Breast epithelium (tissue), 4 donors: ENCODE measurements at regions of chr15 and their contacts with region 1.

Region 1: DNA sequence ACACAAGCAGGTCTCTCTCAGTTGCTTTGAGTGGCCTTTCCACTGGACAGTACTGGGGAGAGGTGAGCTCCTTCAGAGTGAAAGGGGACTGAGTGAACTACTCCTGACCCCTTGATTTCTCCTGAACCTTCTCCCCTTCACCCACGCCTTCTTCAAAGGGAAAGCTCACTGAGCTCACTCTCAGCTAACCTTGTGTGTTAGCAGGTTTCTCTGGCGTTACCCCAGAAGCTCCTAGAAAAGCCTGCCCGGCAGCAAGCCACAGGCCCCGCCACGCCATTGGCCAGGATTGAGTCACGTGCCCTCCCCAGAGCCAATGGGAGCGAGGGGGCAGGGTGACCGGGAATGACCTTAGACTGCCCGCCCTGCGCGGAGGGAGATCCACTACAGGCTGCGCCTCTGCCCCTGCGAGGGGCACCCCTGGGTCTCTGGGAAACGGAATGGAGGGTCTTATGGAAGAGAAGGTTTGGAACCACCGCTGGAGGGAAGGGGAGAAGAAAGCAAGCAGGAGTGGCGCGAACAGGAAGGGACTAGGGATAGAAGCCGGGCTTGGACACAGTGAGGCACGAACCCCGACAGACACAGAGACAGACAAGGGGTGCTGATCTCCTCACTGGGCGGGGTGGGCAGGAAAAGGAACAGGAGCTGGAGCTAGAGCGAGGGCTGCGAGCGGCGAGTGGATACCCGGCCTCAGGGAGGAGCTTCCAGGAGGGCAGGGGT is 17.4 kb upstream of the CLK3 start:
- DNase-seq: peak; percentile 93 to 96
- H3K4me3 ChIP-seq: peak overlapping the region; percentile 53 to 63 (median 61)
- H3K27ac ChIP-seq: peak overlapping the region; percentile 67 to 87
- H3K4me1 ChIP-seq: no peaks in the 10 kb centered on the region
- H3K27me3 ChIP-seq: no peaks in the 10 kb centered on the region
- CTCF ChIP-seq: no peak
- POLR2A ChIP-seq: peak; percentile 48

Region 2: GRCh38 chr15:74615508-74616365 is 17.5 kb after region 1 on chr15 and contains the start of gene CLK3:
- intact Hi-C with region 1: no loop called
- DNase-seq: peak; percentile 93 to 95
- H3K4me3 ChIP-seq: peak within 1 kb of the TSS; percentile 90 to 99 (median 98)
- H3K27ac ChIP-seq: peak within 1 kb of the TSS; percentile 99
- H3K4me1 ChIP-seq: peaks cover 0 to 29% of the 10 kb centered on the region in 2 donors
- H3K27me3 ChIP-seq: no peaks in the 10 kb centered on the region
- CTCF ChIP-seq: no peak
- POLR2A ChIP-seq: peak; percentile 65
- total RNA-seq, gene CLK3: 99.2 to 110 (median 101) TPM

Region 3: DNA sequence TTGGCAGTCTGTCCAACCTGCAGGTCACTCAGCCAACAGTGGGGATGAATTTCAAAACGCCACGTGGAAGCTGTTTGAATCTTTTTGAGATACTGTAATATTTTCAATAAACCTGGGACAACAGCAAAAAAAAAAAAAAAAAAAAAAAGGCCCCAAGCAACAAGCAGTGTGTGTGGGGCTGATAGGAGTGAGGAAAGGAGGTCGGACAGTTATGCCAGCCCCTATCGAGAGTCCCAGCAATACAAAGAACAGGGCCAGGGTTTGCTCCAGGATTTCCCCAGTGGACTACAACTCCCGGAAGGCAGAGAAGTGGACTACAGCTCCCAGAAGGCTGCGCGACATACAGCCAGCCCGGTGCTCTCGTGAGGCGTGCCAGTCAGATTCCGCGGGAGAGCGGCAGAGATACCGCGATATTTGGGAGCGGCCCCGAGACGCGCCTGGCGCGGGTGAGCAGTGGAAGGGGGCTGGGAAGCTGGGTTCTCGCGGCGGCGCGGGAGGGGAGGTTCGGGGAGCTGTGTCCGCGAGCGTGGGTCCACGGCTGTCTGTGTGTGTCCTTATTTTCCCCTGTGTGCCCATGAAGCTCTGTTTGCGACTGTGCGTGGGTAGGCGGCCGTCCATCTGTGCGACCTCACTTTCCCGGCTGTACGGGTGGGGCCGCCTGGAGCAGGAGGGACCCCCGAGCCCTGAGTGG is 425.0 kb after region 1 on chr15 and contains the start of gene PPCDC:
- intact Hi-C with region 1: loop called (anchors 5 kb)
- DNase-seq: peak; percentile 95
- H3K4me3 ChIP-seq: peak within 1 kb of the TSS; percentile 70 to 92 (median 77)
- H3K27ac ChIP-seq: peak within 1 kb of the TSS; percentile 77 to 91
- H3K4me1 ChIP-seq: peaks cover 0 to 5% of the 10 kb centered on the region in 2 donors
- H3K27me3 ChIP-seq: no peaks in the 10 kb centered on the region
- CTCF ChIP-seq: no peak
- POLR2A ChIP-seq: peak; percentile 71
- total RNA-seq, gene PPCDC: 17.3 to 19.0 (median 18.9) TPM